ENCODE measurements at regions of chr18 and their contacts with region 1.

Region 1: GRCh38 chr18:11733031-11733430 is 44.0 kb downstream of the GNAL start:
- DNase-seq: peak; percentile 32
- ATAC-seq: peak; percentile 98
- H3K4me3 ChIP-seq: peak overlapping the region in 1 of 3 experiments; percentile 12; a peak in 1 of 6 replicates
- H3K27ac ChIP-seq: no peak overlapping the region
- H3K4me1 ChIP-seq: no peaks in the 10 kb centered on the region
- H3K27me3 ChIP-seq: peaks cover 0 to 9% of the 10 kb centered on the region in 2 experiments; a peak in 2 of 5 replicates
- CTCF ChIP-seq: peak; percentile 93
- EP300 ChIP-seq: no peak
- POLR2A ChIP-seq: no peak
- RAD21 ChIP-seq: peak; percentile 85

Region 2: GRCh38 chr18:11937874-11938478 is 204.9 kb after region 1 on chr18:
- CTCF ChIA-PET with region 1: no interaction called
- POLR2A ChIA-PET with region 1: no interaction called
- in situ Hi-C with region 1: no loop called
- intact Hi-C with region 1: loop called (anchors 5 kb)
- DNase-seq: peak; percentile 48
- ATAC-seq: peak; percentile 68
- H3K4me3 ChIP-seq: no peak overlapping the region
- H3K27ac ChIP-seq: no peak overlapping the region
- H3K4me1 ChIP-seq: no peaks in the 10 kb centered on the region
- H3K27me3 ChIP-seq: no peaks in the 10 kb centered on the region; a peak in 1 of 5 replicates
- CTCF ChIP-seq: peak; percentile 87
- EP300 ChIP-seq: no peak
- POLR2A ChIP-seq: no peak
- RAD21 ChIP-seq: peak; percentile 86

Region 3: DNA sequence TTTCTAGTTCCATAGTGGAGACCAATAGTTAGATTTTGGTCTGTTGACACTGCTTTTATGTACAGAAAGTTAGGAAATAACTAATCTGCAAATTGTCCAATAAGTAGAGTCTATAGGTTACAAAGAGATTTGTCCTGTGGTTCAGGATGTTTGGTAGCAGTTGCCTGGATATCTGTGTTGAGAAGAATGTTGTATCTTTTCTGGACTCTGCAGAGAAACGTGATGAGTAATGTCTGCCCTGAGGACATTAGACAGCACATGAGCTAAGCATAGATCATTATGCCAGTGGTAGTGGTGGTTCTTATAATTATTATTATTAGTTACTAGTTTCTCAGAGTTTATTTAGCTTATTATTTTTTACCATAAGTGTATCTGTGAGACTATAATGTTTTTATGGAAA is 426.4 kb after region 1 on chr18:
- CTCF ChIA-PET with region 1: no interaction called
- POLR2A ChIA-PET with region 1: no interaction called
- in situ Hi-C with region 1: no loop called
- intact Hi-C with region 1: no loop called
- DNase-seq: peak; percentile 18
- ATAC-seq: peak; percentile 70
- H3K4me3 ChIP-seq: no peak overlapping the region
- H3K27ac ChIP-seq: no peak overlapping the region
- H3K4me1 ChIP-seq: peaks cover 5% of the 10 kb centered on the region; the same call in 1 of the 2 replicates
- H3K27me3 ChIP-seq: no peaks in the 10 kb centered on the region; a peak in 1 of 5 replicates
- CTCF ChIP-seq: no peak
- EP300 ChIP-seq: no peak
- POLR2A ChIP-seq: no peak
- RAD21 ChIP-seq: no peak

Measured in HepG2 (cell line).